Activated CD4-positive, alpha-beta T cell treated with anti-CD3 and anti-CD28 coated beads for 36 hours (primary cell): ENCODE measurements at regions of chr20 and their contacts with region 1.

Region 1: DNA sequence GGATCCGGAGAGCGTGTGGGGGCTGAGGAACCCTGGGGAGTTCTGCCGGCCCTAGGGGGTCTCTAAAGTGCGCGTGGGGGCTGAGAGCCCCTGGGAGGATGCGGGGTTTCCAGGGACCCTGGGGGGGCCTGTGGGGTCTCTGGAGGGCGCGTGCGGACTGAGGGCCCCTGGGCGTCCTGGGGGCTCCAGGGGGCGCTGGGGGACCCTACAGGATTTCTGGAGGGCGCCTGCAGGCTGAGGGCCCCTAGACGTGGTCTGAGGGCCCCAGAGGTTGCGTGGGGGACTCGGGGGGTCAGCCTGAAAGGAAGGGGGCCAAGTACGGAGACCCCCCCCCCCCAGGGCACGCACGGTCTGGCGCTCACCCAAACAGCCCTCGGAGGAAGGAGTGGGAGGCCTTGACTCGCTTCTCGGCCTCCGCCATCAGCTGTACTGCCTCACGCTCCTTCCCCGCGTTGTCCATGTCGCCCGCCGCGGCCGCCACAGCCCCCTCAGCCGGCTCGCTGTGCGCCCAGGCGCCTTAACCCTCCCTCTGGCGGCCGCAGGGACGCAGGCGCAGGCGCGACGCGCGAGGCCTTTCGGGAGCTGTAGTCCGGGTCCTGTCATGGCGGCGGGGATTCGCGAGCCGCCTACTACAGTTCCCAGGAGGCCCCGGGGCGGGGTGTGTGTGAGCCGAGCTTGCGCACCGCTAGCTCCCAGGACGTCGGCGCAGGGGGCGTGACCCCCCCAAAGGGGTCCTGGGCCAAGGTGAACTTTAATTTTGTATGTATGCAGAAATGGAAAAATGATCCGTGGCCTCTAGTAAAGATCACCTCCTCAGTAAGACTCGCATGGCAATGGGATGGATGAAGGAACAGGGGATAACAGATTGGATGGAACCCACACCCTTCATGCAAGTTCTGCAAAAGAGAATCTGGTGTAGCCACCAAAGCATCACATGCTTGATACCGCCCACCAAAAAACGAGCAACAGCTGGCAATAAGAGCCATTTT is at the start of gene NAPB:
- DNase-seq: peak; percentile 96
- ATAC-seq: peak; percentile 99
- H3K4me3 Mint-ChIP-seq: peak within 1 kb of the TSS; percentile 86
- H3K27ac Mint-ChIP-seq: peak within 1 kb of the TSS; percentile 60
- H3K4me1 Mint-ChIP-seq: peaks cover 26% of the 10 kb centered on the region
- H3K27me3 Mint-ChIP-seq: peaks cover 8% of the 10 kb centered on the region
- total RNA-seq, gene NAPB: 6.1 to 8.1 TPM

Region 2: GRCh38 chr20:23350196-23350903 is 70.9 kb before region 1 on chr20 and contains the start of gene NXT1:
- CTCF ChIA-PET with region 1: interaction called, 20 read pairs
- POLR2A ChIA-PET with region 1: interaction called, 15 read pairs
- intact Hi-C with region 1: loop called (anchors 1 to 2 kb)
- DNase-seq: peak; percentile 96
- ATAC-seq: peak; percentile 93
- H3K4me3 Mint-ChIP-seq: peak within 1 kb of the TSS; percentile 85
- H3K27ac Mint-ChIP-seq: peak within 1 kb of the TSS; percentile 100
- H3K4me1 Mint-ChIP-seq: peaks cover 24% of the 10 kb centered on the region
- H3K27me3 Mint-ChIP-seq: no peaks in the 10 kb centered on the region
- total RNA-seq, gene NXT1: 34.4 to 35.5 TPM

Region 3: DNA sequence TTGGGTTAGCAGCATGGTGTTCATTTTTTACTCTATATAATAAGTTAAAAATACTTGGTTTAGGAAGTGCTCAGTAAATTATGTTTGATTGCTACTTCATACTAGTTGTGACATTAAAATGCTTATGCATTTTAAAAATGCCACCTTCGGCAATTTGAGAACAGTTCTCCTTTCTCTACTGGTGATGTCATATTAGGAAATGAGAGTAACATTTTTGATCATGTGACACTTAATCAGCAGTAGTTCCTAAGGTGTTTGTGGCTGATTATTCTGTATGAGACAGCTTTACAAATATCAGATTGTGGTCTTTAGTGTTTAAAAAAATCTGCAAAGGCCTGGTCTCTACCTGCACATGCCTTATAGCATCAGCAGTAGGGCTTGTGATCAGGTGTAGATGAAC is 54.9 kb before region 1 on chr20:
- CTCF ChIA-PET with region 1: interaction called, 4 read pairs
- POLR2A ChIA-PET with region 1: interaction called, 6 read pairs
- intact Hi-C with region 1: loop called (anchors 1 kb)
- DNase-seq: no peak
- ATAC-seq: peak; percentile 7
- H3K4me3 Mint-ChIP-seq: no peak overlapping the region
- H3K27ac Mint-ChIP-seq: peak overlapping the region; percentile 59
- H3K4me1 Mint-ChIP-seq: peaks cover 51% of the 10 kb centered on the region
- H3K27me3 Mint-ChIP-seq: no peaks in the 10 kb centered on the region

Region 4: DNA sequence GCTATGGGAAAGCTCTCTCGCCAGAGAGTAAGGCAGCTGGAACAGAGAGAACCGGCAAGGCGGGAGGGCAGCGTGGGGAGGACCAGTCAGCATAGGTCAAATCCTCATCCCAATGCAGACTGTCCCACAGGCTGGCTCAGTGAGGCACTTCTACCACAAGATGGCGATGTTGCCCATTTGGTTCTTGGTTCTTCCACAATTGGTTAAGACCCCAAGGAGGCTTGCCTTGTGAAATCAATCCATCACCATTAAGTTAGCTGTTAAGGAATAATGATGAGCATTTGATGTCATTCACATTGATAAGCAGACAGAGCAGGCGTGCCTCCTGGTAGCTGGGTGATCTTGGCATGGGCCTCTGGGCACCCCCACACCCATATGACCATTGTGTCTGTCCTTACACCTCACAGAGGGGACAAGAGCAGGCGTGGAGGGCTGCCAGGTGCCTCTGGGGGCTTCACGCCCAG is 20.6 kb after region 1 on chr20:
- CTCF ChIA-PET with region 1: interaction called, 5 read pairs
- POLR2A ChIA-PET with region 1: no interaction called
- intact Hi-C with region 1: loop called in 1 of 2 experiments (anchors 1 kb)
- DNase-seq: peak; percentile 77
- ATAC-seq: peak; percentile 83
- H3K4me3 Mint-ChIP-seq: no peak overlapping the region
- H3K27ac Mint-ChIP-seq: no peak overlapping the region
- H3K4me1 Mint-ChIP-seq: no peaks in the 10 kb centered on the region
- H3K27me3 Mint-ChIP-seq: peaks cover 2% of the 10 kb centered on the region